MCF 10A (cell line): ENCODE measurements at regions of chr2 and their contacts with region 1.

Region 1: DNA sequence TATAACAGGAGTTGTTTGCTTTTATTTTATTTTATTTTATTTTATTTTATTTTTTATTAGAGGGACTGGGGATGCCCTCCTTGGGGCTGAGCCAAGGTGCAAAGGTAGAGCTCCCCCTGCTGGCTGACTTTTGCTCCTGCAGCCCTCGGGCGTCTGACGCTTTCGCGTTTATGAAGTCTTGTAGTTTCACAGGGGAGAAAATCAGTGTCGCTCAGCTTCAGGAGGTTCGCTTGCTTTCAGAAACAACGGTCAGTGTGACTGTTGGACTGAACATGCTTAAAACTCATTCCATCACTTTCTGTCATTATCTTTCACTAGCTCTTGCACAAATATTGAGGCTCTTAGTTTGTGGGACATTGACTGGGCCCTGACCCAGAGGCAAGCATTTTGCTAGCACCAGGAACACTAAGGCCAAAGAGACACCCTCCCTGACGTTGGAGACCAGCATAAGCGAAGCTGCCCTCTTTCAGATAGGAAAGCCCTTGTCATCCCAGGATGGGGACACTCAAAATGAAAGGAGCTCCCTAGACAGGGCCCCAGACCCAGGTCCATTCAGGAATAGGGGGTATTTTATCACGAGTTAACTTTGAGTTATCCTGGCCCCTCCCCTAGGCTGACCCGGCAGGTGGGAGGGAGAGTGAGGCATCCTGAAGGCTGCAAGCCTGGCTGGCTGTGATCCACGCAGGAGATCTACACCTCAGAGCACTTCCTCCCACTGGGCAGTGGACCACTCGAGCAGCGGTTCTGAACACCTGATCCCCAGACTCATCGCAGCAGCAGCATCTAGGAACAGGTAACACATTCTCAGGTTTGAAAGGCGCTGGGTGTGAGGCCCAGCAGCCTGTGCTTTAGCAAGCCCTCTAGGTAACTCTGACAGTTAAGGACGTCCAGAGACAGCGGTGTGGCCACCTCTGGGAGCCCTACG is 34.4 kb downstream of the LGALSL start:
- DNase-seq: peak; percentile 72
- H3K4me3 Mint-ChIP-seq: no peak overlapping the region
- H3K27ac Mint-ChIP-seq: no peak overlapping the region
- H3K4me1 Mint-ChIP-seq: peaks cover 27% of the 10 kb centered on the region
- H3K27me3 Mint-ChIP-seq: no peaks in the 10 kb centered on the region
- CTCF ChIP-seq: peak; percentile 92

Region 2: GRCh38 chr2:64311948-64312621 is 176.2 kb before region 1 on chr2:
- CTCF ChIA-PET with region 1: interaction called, 11 read pairs
- POLR2A ChIA-PET with region 1: interaction called, 3 read pairs
- intact Hi-C with region 1: no loop called
- DNase-seq: peak; percentile 96
- H3K4me3 Mint-ChIP-seq: no peak overlapping the region
- H3K27ac Mint-ChIP-seq: peak overlapping the region; percentile 39
- H3K4me1 Mint-ChIP-seq: peaks cover 23% of the 10 kb centered on the region
- H3K27me3 Mint-ChIP-seq: no peaks in the 10 kb centered on the region
- CTCF ChIP-seq: peak; percentile 56

Region 3: GRCh38 chr2:64453770-64454385 is 34.4 kb before region 1 on chr2 and contains the start of gene LGALSL:
- CTCF ChIA-PET with region 1: interaction called, 15 read pairs
- POLR2A ChIA-PET with region 1: interaction called, 7 read pairs
- intact Hi-C with region 1: loop called (anchors 5 kb)
- DNase-seq: peak; percentile 66
- H3K4me3 Mint-ChIP-seq: peak within 1 kb of the TSS; percentile 75
- H3K27ac Mint-ChIP-seq: peak within 1 kb of the TSS; percentile 86
- H3K4me1 Mint-ChIP-seq: peaks cover 16% of the 10 kb centered on the region
- H3K27me3 Mint-ChIP-seq: no peaks in the 10 kb centered on the region
- CTCF ChIP-seq: no peak
- total RNA-seq, gene LGALSL: 11.4 and 13.5 TPM in 2 replicates

Region 4: DNA sequence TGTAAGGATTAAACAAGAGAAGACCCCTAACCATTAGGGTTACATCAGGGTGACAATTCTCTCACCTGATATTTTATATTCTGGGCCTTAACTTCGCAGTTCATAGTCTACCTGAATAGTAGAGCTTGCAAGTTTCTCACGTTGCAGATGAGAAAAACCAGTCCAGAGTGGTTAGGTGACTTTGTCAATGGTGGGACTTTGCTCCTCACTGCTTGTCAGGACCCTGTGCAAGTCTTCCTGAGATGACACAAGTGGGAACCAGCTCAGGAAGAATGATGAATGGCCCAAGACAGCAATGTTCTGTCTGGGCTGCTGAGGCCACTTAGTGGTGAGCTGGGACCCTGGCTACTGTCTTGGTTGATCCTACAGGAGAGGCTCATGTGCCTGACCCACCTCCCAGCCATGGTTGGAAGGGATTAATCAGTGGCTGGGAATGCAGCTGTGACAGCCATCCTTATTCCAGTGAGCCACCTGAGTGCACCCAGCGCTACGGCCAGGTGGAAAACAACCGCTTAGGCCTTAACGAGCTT is 17.5 kb before region 1 on chr2:
- CTCF ChIA-PET with region 1: interaction called, 11 read pairs
- POLR2A ChIA-PET with region 1: interaction called, 6 read pairs
- intact Hi-C with region 1: no loop called
- DNase-seq: no peak
- H3K4me3 Mint-ChIP-seq: no peak overlapping the region
- H3K27ac Mint-ChIP-seq: no peak overlapping the region
- H3K4me1 Mint-ChIP-seq: no peaks in the 10 kb centered on the region
- H3K27me3 Mint-ChIP-seq: no peaks in the 10 kb centered on the region
- CTCF ChIP-seq: no peak

Region 5: DNA sequence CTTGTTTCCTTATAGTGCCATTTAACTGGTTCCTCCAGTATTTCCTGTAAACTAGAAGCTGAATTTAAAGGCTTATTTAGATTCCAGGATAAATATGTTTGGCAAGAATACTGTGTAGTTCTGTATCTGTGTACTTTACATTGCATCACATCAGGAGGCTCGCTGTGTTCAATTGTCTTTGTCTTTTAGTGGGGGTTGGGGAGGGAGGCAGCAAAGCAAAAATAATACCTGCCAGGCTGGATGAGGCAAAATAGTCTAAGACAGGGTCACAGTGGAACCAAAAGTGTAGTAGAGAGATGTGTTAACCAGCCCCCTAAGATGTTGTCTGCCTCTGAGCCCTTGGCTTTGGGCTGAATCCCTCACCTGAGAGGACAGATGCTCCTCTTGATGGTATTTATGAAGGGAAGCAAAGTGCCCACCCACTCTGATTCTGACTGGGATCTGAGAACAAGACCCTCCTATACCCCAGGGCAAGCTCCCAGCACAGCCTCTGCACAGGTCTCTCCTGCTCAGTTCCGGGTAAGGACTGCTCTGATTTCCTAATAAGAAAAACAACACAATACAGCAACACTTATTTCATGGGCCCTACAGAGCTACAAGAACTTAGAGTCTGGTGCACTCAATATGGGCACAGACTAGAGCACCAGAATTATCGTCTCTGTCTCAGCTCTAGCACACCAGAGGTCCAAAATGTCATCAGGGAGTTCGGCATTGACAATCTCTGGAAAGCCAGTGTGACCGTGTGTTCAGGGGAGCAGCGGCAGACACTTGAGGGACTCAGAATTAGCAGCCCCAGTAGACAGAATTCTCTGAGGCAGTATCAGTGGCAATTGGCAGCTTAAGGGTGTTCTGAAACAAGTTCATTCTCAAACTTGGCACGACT is 28.6 kb after region 1 on chr2:
- CTCF ChIA-PET with region 1: interaction called, 10 read pairs
- POLR2A ChIA-PET with region 1: interaction called, 5 read pairs
- intact Hi-C with region 1: no loop called
- DNase-seq: no peak
- H3K4me3 Mint-ChIP-seq: no peak overlapping the region
- H3K27ac Mint-ChIP-seq: no peak overlapping the region
- H3K4me1 Mint-ChIP-seq: no peaks in the 10 kb centered on the region
- H3K27me3 Mint-ChIP-seq: no peaks in the 10 kb centered on the region
- CTCF ChIP-seq: no peak